PC-3 (cell line): ENCODE measurements at regions of chr2 and their contacts with region 1.

Region 1: DNA sequence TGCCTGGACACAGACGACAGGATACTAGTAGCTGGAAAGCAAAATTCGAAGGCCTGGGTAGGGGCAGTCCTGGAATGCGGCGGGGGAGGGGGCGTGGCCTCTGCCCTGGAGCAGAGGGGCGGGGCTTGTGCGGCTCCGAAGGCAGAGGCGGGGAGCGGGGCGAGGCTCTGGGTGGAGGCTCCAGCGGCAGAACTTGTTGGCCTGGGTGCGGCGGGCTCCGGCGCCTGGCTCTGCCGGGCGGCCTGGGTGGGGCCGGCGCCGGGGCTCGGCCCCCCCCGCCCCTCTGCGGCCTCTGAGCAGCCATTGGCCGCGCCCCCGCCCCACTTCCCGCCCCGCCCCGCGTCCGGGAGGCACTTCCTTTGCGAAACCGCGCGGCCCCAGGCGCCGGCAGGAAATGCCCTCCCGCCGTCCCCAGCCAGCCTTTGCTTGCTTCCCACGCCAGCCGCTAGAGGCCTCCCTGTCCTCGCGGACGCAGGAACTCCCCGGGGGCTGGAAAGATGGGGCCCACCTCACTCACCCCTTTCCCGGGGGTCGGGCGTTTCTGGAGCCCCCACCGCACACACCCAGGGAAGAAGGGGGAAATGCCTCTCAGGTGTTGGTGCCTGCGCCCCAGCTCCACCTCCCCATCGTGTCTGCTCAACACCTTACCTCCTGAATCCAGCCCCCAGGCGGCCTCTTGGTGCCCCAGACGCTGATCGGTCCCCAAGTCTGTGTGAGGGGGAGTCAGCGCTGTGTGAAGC is 6.7 kb downstream of the CTDSP1 start:
- DNase-seq: peak; percentile 96
- ATAC-seq: peak; percentile 87
- H3K4me3 ChIP-seq: peak overlapping the region; percentile 67
- H3K27ac ChIP-seq: peak overlapping the region; percentile 47
- H3K4me1 ChIP-seq: peaks cover 20% of the 10 kb centered on the region
- H3K27me3 ChIP-seq: no peaks in the 10 kb centered on the region
- CTCF ChIP-seq: peak; percentile 82

Region 2: DNA sequence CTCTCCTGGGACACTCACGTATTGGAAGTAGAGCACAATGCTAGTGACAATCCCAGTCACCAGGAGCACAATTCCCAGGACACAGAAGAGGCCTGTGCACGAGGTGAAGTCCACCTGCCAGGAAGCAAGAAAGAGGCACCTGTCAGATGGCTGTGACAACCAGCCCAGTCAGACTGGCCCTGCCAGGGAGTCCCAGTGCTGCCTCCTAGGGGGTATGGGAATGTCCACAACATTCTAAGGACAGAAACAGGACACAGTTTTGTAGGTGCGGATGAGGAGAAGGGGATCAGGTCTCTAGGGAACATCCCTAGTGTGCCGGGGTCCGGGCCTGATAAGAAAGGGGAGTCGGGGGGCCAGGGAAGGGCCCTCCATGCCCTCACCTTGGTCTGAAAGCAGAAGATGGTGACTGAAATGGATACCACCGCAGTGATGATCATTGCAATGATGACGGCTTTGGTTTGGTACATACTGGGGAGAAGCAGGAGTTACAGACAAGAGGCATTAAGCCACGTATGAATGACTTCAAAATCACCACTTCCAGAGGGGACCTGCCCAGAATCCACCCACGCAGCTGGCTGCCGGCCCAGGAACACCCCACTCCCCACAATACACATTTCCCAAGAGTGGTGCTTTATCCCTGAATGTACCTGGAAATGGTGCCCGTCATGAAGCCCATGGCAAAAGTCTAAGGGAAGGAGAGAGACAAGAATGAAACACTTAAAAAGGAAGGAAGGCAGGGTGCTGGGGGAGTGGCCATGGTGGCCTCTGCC is 129.2 kb before region 1 on chr2:
- CTCF ChIA-PET with region 1: no interaction called
- POLR2A ChIA-PET with region 1: no interaction called
- intact Hi-C with region 1: no loop called
- DNase-seq: peak; percentile 38
- ATAC-seq: no peak
- H3K4me3 ChIP-seq: no peak overlapping the region
- H3K27ac ChIP-seq: no peak overlapping the region
- H3K4me1 ChIP-seq: peaks cover 20% of the 10 kb centered on the region
- H3K27me3 ChIP-seq: no peaks in the 10 kb centered on the region
- CTCF ChIP-seq: peak; percentile 54

Region 3: GRCh38 chr2:218444692-218445357 is 38.4 kb after region 1 on chr2:
- CTCF ChIA-PET with region 1: no interaction called
- POLR2A ChIA-PET with region 1: no interaction called
- intact Hi-C with region 1: loop called (anchors 2 kb)
- DNase-seq: peak; percentile 87
- ATAC-seq: peak; percentile 86
- H3K4me3 ChIP-seq: no peak overlapping the region
- H3K27ac ChIP-seq: peak overlapping the region; percentile 24; the same call in 1 of the 2 replicates
- H3K4me1 ChIP-seq: peaks cover 37% of the 10 kb centered on the region
- H3K27me3 ChIP-seq: no peaks in the 10 kb centered on the region
- CTCF ChIP-seq: no peak

Region 4: DNA sequence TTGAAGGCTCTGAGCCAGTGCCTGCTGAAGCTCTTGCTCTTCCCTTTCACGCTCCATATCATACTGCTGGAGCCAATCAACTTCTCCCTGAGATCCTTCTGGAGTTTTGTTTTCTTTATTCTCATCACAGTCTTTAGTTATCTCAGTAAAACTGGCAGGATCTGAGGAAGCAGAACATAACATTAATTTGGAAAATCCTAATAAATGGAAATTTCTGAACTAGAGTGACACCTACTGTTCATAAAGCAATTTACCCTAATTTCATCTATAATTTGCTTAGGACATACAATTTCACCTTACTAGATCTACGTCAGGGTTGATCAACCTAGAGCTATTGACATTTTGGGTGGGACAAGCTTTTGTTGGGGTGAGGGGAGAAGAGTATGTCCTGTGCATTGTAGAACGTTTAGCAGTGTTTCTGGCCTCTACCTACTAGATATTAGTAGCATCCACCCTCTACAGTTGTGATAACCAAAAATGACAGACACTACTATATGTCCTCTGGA is 59.7 kb after region 1 on chr2:
- CTCF ChIA-PET with region 1: no interaction called
- POLR2A ChIA-PET with region 1: no interaction called
- intact Hi-C with region 1: loop called (anchors 1 kb)
- DNase-seq: peak; percentile 60
- ATAC-seq: peak; percentile 54
- H3K4me3 ChIP-seq: no peak overlapping the region
- H3K27ac ChIP-seq: no peak overlapping the region
- H3K4me1 ChIP-seq: no peaks in the 10 kb centered on the region
- H3K27me3 ChIP-seq: no peaks in the 10 kb centered on the region
- CTCF ChIP-seq: peak; percentile 76

Region 5: GRCh38 chr2:218618102-218618860 is 211.9 kb after region 1 on chr2:
- CTCF ChIA-PET with region 1: no interaction called
- POLR2A ChIA-PET with region 1: no interaction called
- intact Hi-C with region 1: loop called (anchors 1 kb)
- DNase-seq: peak; percentile 49
- ATAC-seq: peak; percentile 77
- H3K4me3 ChIP-seq: no peak overlapping the region
- H3K27ac ChIP-seq: no peak overlapping the region
- H3K4me1 ChIP-seq: no peaks in the 10 kb centered on the region
- H3K27me3 ChIP-seq: no peaks in the 10 kb centered on the region
- CTCF ChIP-seq: peak; percentile 44

Region 6: GRCh38 chr2:218648088-218648786 is 241.9 kb after region 1 on chr2:
- CTCF ChIA-PET with region 1: no interaction called
- POLR2A ChIA-PET with region 1: no interaction called
- intact Hi-C with region 1: loop called (anchors 1 kb)
- DNase-seq: peak; percentile 80
- ATAC-seq: peak; percentile 54
- H3K4me3 ChIP-seq: no peak overlapping the region
- H3K27ac ChIP-seq: no peak overlapping the region
- H3K4me1 ChIP-seq: peaks cover 31% of the 10 kb centered on the region
- H3K27me3 ChIP-seq: no peaks in the 10 kb centered on the region
- CTCF ChIP-seq: peak; percentile 94